CD8-positive, alpha-beta T cell (primary cell): ENCODE measurements at regions of chr9 and their contacts with region 1.

Region 1: DNA sequence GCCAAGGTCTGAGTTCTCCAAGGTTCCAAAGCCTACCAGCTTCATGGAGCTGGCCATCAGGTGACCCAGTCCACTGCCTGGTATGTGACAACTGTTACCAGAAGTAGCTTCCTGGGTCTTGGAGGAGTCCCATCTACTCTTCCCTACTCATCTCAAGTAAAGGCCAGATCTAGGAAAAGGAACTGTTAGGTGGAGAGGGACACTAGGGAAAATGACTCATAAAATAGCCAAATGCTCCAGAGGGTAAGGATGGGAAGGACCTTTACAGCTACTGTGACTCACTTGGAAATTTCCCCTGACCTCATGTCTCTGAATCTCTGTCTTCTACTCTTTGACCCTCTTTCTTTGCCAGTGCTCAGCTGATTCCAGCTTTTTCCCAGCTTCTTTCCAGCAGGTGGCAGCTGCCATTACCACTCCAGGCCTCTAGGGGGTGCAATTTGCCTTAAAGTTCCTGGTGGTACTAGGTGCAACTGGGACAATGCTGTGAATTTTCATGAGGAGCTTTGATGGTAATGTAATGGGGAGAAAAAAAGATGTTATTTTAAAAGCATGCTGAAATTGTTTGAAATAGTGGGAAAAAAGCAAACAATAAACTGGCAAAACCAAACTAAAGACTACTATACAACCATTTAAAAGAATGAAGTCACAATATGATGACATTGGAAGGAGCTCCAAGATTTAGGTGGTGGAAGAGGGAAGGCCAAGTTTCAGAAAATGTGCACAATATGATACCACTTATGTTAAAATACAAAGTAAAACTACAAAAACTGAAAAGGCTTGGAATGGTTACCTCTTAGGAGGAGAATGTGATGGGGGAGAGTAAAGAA is 27.1 kb upstream of the MYORG start:
- DNase-seq: peak in 8 of 9 experiments; percentile 34 to 66 (median 60)
- ATAC-seq: no peak
- H3K4me3 ChIP-seq: no peak overlapping the region
- H3K4me3 Mint-ChIP-seq: no peak overlapping the region
- H3K27ac ChIP-seq: no peak overlapping the region
- H3K27ac Mint-ChIP-seq: no peak overlapping the region
- H3K4me1 ChIP-seq: no peaks in the 10 kb centered on the region
- H3K4me1 Mint-ChIP-seq: no peaks in the 10 kb centered on the region
- H3K27me3 ChIP-seq: no peaks in the 10 kb centered on the region
- H3K27me3 Mint-ChIP-seq: no peaks in the 10 kb centered on the region
- CTCF ChIP-seq: peak; percentile 99

Region 2: GRCh38 chr9:33992632-33993031 is 411.1 kb before region 1 on chr9:
- CTCF ChIA-PET with region 1: no interaction called
- POLR2A ChIA-PET with region 1: no interaction called
- intact Hi-C with region 1: no loop called
- DNase-seq: no peak
- ATAC-seq: no peak
- H3K4me3 ChIP-seq: no peak overlapping the region
- H3K4me3 Mint-ChIP-seq: no peak overlapping the region
- H3K27ac ChIP-seq: no peak overlapping the region
- H3K27ac Mint-ChIP-seq: no peak overlapping the region
- H3K4me1 ChIP-seq: no peaks in the 10 kb centered on the region
- H3K4me1 Mint-ChIP-seq: no peaks in the 10 kb centered on the region
- H3K27me3 ChIP-seq: no peaks in the 10 kb centered on the region
- H3K27me3 Mint-ChIP-seq: no peaks in the 10 kb centered on the region
- CTCF ChIP-seq: no peak

Region 3: DNA sequence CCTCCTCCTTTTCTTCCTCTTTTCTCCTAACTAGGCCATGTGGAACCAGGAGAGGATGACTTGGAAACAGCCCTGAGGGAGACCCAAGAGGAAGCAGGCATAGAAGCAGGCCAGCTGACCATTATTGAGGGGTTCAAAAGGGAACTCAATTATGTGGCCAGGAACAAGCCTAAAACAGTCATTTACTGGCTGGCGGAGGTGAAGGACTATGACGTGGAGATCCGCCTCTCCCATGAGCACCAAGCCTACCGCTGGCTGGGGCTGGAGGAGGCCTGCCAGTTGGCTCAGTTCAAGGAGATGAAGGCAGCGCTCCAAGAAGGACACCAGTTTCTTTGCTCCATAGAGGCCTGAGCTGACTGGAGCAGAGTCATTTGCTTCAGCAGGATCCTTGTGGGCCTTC is 60.7 kb before region 1 on chr9:
- CTCF ChIA-PET with region 1: interaction called, 11 read pairs
- POLR2A ChIA-PET with region 1: no interaction called
- intact Hi-C with region 1: no loop called
- DNase-seq: peak in 1 of 9 experiments; percentile 37
- ATAC-seq: no peak
- H3K4me3 ChIP-seq: no peak overlapping the region
- H3K4me3 Mint-ChIP-seq: no peak overlapping the region
- H3K27ac ChIP-seq: no peak overlapping the region
- H3K27ac Mint-ChIP-seq: no peak overlapping the region
- H3K4me1 ChIP-seq: no peaks in the 10 kb centered on the region
- H3K4me1 Mint-ChIP-seq: no peaks in the 10 kb centered on the region
- H3K27me3 ChIP-seq: no peaks in the 10 kb centered on the region
- H3K27me3 Mint-ChIP-seq: no peaks in the 10 kb centered on the region
- CTCF ChIP-seq: no peak

Region 4: GRCh38 chr9:34392511-34392910 is 11.3 kb before region 1 on chr9:
- CTCF ChIA-PET with region 1: interaction called, 21 read pairs
- POLR2A ChIA-PET with region 1: no interaction called
- intact Hi-C with region 1: no loop called
- DNase-seq: no peak
- ATAC-seq: no peak
- H3K4me3 ChIP-seq: no peak overlapping the region
- H3K4me3 Mint-ChIP-seq: no peak overlapping the region
- H3K27ac ChIP-seq: no peak overlapping the region
- H3K27ac Mint-ChIP-seq: no peak overlapping the region
- H3K4me1 ChIP-seq: no peaks in the 10 kb centered on the region
- H3K4me1 Mint-ChIP-seq: no peaks in the 10 kb centered on the region
- H3K27me3 ChIP-seq: no peaks in the 10 kb centered on the region
- H3K27me3 Mint-ChIP-seq: no peaks in the 10 kb centered on the region
- CTCF ChIP-seq: no peak

Region 5: GRCh38 chr9:34500623-34501267 is 97.0 kb after region 1 on chr9:
- CTCF ChIA-PET with region 1: interaction called, 87 read pairs
- POLR2A ChIA-PET with region 1: no interaction called
- intact Hi-C with region 1: loop called (anchors 1 kb)
- DNase-seq: peak; percentile 52 to 84 (median 73)
- ATAC-seq: peak; percentile 97
- H3K4me3 ChIP-seq: no peak overlapping the region
- H3K4me3 Mint-ChIP-seq: no peak overlapping the region
- H3K27ac ChIP-seq: no peak overlapping the region
- H3K27ac Mint-ChIP-seq: no peak overlapping the region
- H3K4me1 ChIP-seq: no peaks in the 10 kb centered on the region
- H3K4me1 Mint-ChIP-seq: no peaks in the 10 kb centered on the region
- H3K27me3 ChIP-seq: no peaks in the 10 kb centered on the region
- H3K27me3 Mint-ChIP-seq: peaks cover 10% of the 10 kb centered on the region
- CTCF ChIP-seq: peak; percentile 91

Region 6: GRCh38 chr9:34591248-34591916 is 187.6 kb after region 1 on chr9:
- CTCF ChIA-PET with region 1: interaction called, 41 read pairs
- POLR2A ChIA-PET with region 1: interaction called, 3 read pairs
- intact Hi-C with region 1: loop called (anchors 1 to 2 kb)
- DNase-seq: peak; percentile 59 to 86 (median 80)
- ATAC-seq: peak; percentile 83
- H3K4me3 ChIP-seq: peak overlapping the region; percentile 54 to 73
- H3K4me3 Mint-ChIP-seq: peak overlapping the region; percentile 78
- H3K27ac ChIP-seq: no peak overlapping the region
- H3K27ac Mint-ChIP-seq: no peak overlapping the region
- H3K4me1 ChIP-seq: peaks cover 9% of the 10 kb centered on the region
- H3K4me1 Mint-ChIP-seq: peaks cover 32% of the 10 kb centered on the region
- H3K27me3 ChIP-seq: peaks cover 26 to 47% of the 10 kb centered on the region in 2 experiments
- H3K27me3 Mint-ChIP-seq: peaks cover 70% of the 10 kb centered on the region
- CTCF ChIP-seq: peak; percentile 74